Activated CD4-positive, alpha-beta T cell treated with anti-CD3 and anti-CD28 coated beads for 36 hours (primary cell): ENCODE measurements at regions of chr6 and their contacts with region 1.

Region 1: GRCh38 chr6:109482905-109483735 is at the start of gene ZBTB24:
- DNase-seq: peak; percentile 94
- ATAC-seq: peak; percentile 84
- H3K4me3 Mint-ChIP-seq: peak within 1 kb of the TSS; percentile 96
- H3K27ac Mint-ChIP-seq: peak within 1 kb of the TSS; percentile 94
- H3K4me1 Mint-ChIP-seq: peaks cover 43% of the 10 kb centered on the region
- H3K27me3 Mint-ChIP-seq: no peaks in the 10 kb centered on the region
- total RNA-seq, gene ZBTB24: 12.0 to 14.7 TPM

Region 2: GRCh38 chr6:109440331-109441068 is 42.6 kb before region 1 on chr6 and contains the starts of genes PPIL6 and SMPD2:
- CTCF ChIA-PET with region 1: interaction called, 3 read pairs
- POLR2A ChIA-PET with region 1: no interaction called
- intact Hi-C with region 1: loop called (anchors 1 kb)
- DNase-seq: peak; percentile 86
- ATAC-seq: peak; percentile 85
- H3K4me3 Mint-ChIP-seq: peak within 1 kb of the TSS; percentile 89
- H3K27ac Mint-ChIP-seq: peak within 1 kb of the TSS; percentile 85
- H3K4me1 Mint-ChIP-seq: peaks cover 18% of the 10 kb centered on the region
- H3K27me3 Mint-ChIP-seq: no peaks in the 10 kb centered on the region
- total RNA-seq, gene PPIL6: 0.09 TPM in 1 of 2 experiments, not detected in the other
- total RNA-seq, gene SMPD2: 7.5 to 9.5 TPM

Region 3: DNA sequence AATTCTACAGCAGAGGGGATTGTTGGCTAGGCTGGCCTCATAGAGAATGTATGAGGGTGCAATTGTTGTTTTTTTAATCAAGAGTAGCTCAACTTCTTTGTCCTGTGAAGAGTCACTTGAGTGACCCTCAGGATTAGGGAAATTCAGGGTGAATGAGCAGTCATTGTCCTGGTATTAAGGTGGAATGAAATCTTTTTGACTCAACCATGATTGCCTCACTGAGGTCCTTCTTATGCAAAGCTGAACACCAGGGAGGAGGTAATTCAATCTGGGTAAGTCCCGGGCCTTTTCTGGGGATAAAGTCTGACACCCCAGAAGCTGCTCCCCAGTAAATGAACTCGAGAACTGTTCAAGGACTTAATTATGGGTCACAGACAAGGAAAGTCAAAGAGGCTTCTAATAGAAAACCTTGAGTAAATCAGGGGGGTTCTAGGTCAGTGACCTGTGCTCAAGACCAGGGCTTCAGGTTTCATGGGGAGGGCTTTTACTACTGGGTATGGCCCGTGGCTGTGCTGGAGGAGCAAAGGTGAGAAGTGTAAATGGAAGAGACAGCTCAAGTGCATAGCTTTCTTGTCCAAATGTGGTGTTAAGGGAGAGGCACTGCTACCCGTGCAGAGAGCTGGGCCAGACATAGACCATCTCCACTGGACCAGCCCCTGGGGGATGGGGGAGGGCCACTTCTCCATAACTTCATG is 25.2 kb after region 1 on chr6:
- CTCF ChIA-PET with region 1: no interaction called
- POLR2A ChIA-PET with region 1: no interaction called
- intact Hi-C with region 1: no loop called
- DNase-seq: no peak
- ATAC-seq: no peak
- H3K4me3 Mint-ChIP-seq: no peak overlapping the region
- H3K27ac Mint-ChIP-seq: no peak overlapping the region
- H3K4me1 Mint-ChIP-seq: no peaks in the 10 kb centered on the region
- H3K27me3 Mint-ChIP-seq: no peaks in the 10 kb centered on the region